ENCODE measurements at regions of chr1 and their contacts with region 1.

Region 1: GRCh38 chr1:114780344-114781226 is at the start of gene SIKE1:
- DNase-seq: peak; percentile 96
- H3K4me3 ChIP-seq: peak within 1 kb of the TSS; percentile 79
- H3K27ac ChIP-seq: peak within 1 kb of the TSS; percentile 75
- H3K4me1 ChIP-seq: peaks cover 10% of the 10 kb centered on the region
- CTCF ChIP-seq: no peak; the same call in 1 of the 2 replicates
- total RNA-seq, gene SIKE1: 123 and 142 TPM in 2 replicates

Region 2: GRCh38 chr1:114581335-114582287 is 199.0 kb before region 1 on chr1 and contains the start of gene BCAS2:
- CTCF ChIA-PET with region 1: no interaction called
- POLR2A ChIA-PET with region 1: no interaction called
- intact Hi-C with region 1: loop called (anchors 5 kb)
- DNase-seq: peak; percentile 98
- H3K4me3 ChIP-seq: peak within 1 kb of the TSS; percentile 94
- H3K27ac ChIP-seq: peak within 1 kb of the TSS; percentile 47
- H3K4me1 ChIP-seq: peaks cover 15% of the 10 kb centered on the region
- CTCF ChIP-seq: no peak
- total RNA-seq, gene BCAS2: 40.8 and 41.8 TPM in 2 replicates

Region 3: GRCh38 chr1:114716304-114717170 is 64.0 kb before region 1 on chr1 and contains the start of gene NRAS:
- CTCF ChIA-PET with region 1: no interaction called
- POLR2A ChIA-PET with region 1: no interaction called
- intact Hi-C with region 1: loop called (anchors 2 kb)
- DNase-seq: peak; percentile 94
- H3K4me3 ChIP-seq: peak within 1 kb of the TSS; percentile 87
- H3K27ac ChIP-seq: peak within 1 kb of the TSS; percentile 54
- H3K4me1 ChIP-seq: peaks cover 16% of the 10 kb centered on the region
- CTCF ChIP-seq: no peak
- total RNA-seq, gene NRAS: 28.5 and 32.6 TPM in 2 replicates

Region 4: DNA sequence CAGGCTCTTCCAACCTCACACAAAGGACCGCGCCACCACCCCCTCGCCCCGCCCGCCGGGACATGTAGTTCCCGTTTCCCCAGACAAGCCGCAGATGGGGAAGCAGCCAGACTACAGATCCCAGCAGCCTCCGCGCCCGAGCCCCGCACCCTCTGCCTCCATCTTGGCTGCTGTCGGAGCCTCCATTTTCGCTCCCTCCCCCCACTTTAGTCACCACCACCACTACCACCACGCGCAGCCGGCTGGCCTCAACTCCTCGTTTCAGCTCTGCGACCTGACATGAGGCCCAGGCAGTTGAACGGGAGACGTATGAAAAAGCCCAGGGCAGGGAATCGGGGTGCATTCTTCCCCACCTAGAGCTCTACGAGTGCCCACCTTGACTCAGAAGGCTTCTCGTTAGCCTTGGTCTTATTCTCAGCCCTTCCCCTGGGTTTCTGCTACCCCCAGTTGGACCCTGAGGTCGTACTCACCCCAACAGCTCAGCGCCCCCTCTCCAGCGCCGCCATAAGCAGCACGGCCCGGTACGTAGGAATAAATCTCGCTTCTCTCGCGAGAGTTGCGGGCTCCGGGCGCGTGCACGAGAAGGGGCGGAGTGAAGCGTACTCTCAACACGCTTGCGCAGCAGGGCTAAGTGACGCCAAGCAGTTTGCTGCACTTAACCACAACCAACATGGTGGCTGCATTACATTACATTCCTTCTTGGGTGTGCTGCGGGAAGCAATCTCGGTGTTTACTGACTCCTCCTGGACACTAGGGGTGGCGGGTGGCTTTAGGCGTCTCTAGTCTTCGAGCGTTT is 22.9 kb before region 1 on chr1 and contains the start of gene CSDE1:
- CTCF ChIA-PET with region 1: interaction called, 3 read pairs
- POLR2A ChIA-PET with region 1: interaction called, 9 read pairs
- intact Hi-C with region 1: loop called (anchors 1 kb)
- DNase-seq: peak; percentile 99
- H3K4me3 ChIP-seq: peak within 1 kb of the TSS; percentile 90
- H3K27ac ChIP-seq: peak within 1 kb of the TSS; percentile 84
- H3K4me1 ChIP-seq: peaks cover 40% of the 10 kb centered on the region
- CTCF ChIP-seq: peak; percentile 69
- total RNA-seq, gene CSDE1: 177 and 223 TPM in 2 replicates

Region 5: GRCh38 chr1:115098979-115099692 is 318.6 kb after region 1 on chr1:
- CTCF ChIA-PET with region 1: no interaction called
- POLR2A ChIA-PET with region 1: no interaction called
- intact Hi-C with region 1: loop called (anchors 5 kb)
- DNase-seq: peak; percentile 87
- H3K4me3 ChIP-seq: peak overlapping the region; percentile 70
- H3K27ac ChIP-seq: peak overlapping the region; percentile 93
- H3K4me1 ChIP-seq: peaks cover 40% of the 10 kb centered on the region
- CTCF ChIP-seq: no peak

Measured in OCI-LY7 (cell line).